ENCODE measurements at regions of chr3 and their contacts with region 1.

Region 1: GRCh38 chr3:15768421-15769255 is 29.1 kb downstream of the ANKRD28 start:
- DNase-seq: no peak
- ATAC-seq: peak; percentile 93
- H3K4me3 Mint-ChIP-seq: no peak overlapping the region
- H3K27ac Mint-ChIP-seq: peak overlapping the region; percentile 82
- H3K4me1 Mint-ChIP-seq: peaks cover 42% of the 10 kb centered on the region
- H3K27me3 Mint-ChIP-seq: no peaks in the 10 kb centered on the region

Region 2: GRCh38 chr3:15743587-15744009 is 25.0 kb before region 1 on chr3:
- CTCF ChIA-PET with region 1: interaction called, 12 read pairs
- POLR2A ChIA-PET with region 1: interaction called, 4 read pairs
- intact Hi-C with region 1: loop called (anchors 1 kb)
- DNase-seq: no peak
- ATAC-seq: no peak
- H3K4me3 Mint-ChIP-seq: no peak overlapping the region
- H3K27ac Mint-ChIP-seq: no peak overlapping the region
- H3K4me1 Mint-ChIP-seq: peaks cover 39% of the 10 kb centered on the region
- H3K27me3 Mint-ChIP-seq: no peaks in the 10 kb centered on the region

Region 3: GRCh38 chr3:15753056-15753710 is 15.5 kb before region 1 on chr3:
- CTCF ChIA-PET with region 1: interaction called, 12 read pairs
- POLR2A ChIA-PET with region 1: no interaction called
- intact Hi-C with region 1: no loop called
- DNase-seq: no peak
- ATAC-seq: no peak
- H3K4me3 Mint-ChIP-seq: no peak overlapping the region
- H3K27ac Mint-ChIP-seq: no peak overlapping the region
- H3K4me1 Mint-ChIP-seq: peaks cover 10% of the 10 kb centered on the region
- H3K27me3 Mint-ChIP-seq: no peaks in the 10 kb centered on the region

Measured in activated CD4-positive, alpha-beta T cell treated with anti-CD3 and anti-CD28 coated beads for 36 hours (primary cell).